ENCODE measurements at regions of chr2 and their contacts with region 1.

Region 1: GRCh38 chr2:120305296-120305695 is 40.6 kb upstream of the INHBB start:
- DNase-seq: no peak
- ATAC-seq: no peak
- H3K4me3 ChIP-seq: no peak overlapping the region
- H3K27ac ChIP-seq: no peak overlapping the region
- H3K4me1 ChIP-seq: no peaks in the 10 kb centered on the region; the same call in 1 of the 2 replicates
- H3K27me3 ChIP-seq: no peaks in the 10 kb centered on the region
- CTCF ChIP-seq: peak; percentile 37

Region 2: GRCh38 chr2:120167272-120167671 is 138.0 kb before region 1 on chr2:
- CTCF ChIA-PET with region 1: no interaction called
- POLR2A ChIA-PET with region 1: no interaction called
- in situ Hi-C with region 1: no loop called
- intact Hi-C with region 1: no loop called
- DNase-seq: no peak
- ATAC-seq: no peak
- H3K4me3 ChIP-seq: no peak overlapping the region
- H3K27ac ChIP-seq: no peak overlapping the region
- H3K4me1 ChIP-seq: no peaks in the 10 kb centered on the region
- H3K27me3 ChIP-seq: no peaks in the 10 kb centered on the region
- CTCF ChIP-seq: no peak

Region 3: GRCh38 chr2:120245354-120245791 is 59.9 kb before region 1 on chr2:
- CTCF ChIA-PET with region 1: no interaction called
- POLR2A ChIA-PET with region 1: interaction called, 10 read pairs
- in situ Hi-C with region 1: no loop called
- intact Hi-C with region 1: no loop called
- DNase-seq: no peak
- ATAC-seq: peak; percentile 75
- H3K4me3 ChIP-seq: no peak overlapping the region
- H3K27ac ChIP-seq: peak overlapping the region; percentile 48
- H3K4me1 ChIP-seq: peaks cover 23% of the 10 kb centered on the region
- H3K27me3 ChIP-seq: no peaks in the 10 kb centered on the region
- CTCF ChIP-seq: no peak

Measured in Panc1 (cell line).